ENCODE measurements at regions of chr5 and their contacts with region 1.

Region 1: DNA sequence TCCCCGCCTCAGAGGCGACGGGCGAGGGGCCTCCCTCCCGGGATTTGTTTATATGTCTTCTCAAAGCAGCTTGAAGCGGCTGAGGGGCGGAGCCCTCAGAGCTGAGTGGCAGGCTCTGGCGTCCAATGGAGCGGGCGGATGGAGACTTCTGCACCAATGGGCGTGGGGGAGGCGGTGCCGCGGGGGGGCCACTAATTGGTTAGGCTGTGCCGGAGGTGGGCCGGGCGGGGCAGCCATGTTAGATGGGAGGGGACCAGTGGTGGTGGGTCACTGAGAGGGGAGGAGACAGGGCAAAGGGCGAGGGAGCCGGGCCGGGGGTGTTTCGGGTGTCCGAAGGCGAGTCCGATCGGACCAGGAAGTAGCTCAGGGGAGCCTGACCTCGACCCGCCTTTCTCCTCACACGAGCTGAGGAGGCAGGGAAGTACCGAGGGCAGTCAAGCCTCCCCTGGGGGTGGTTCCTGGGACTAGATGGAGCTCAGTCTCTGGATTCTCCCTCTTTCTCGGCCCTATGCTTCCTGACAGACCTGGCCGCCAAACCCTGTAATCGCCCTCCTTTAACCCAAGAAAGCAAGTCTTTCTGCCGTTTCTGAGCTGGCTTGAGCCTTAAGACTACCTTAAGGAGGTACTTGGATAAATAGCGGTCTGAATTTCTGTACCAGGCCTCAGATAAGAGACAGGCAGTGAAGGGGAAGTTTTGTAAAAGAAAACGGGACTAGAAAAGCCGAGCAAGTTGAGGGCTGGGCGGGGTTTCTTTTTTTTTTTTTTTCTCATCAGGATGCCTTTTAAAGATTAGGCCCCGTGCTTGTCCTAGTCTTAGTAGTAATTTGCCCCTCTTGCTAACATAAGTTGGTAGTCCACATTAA is 1.1 kb downstream of the CREBRF start:
- DNase-seq: peak; percentile 94 to 100
- H3K4me3 ChIP-seq: peak overlapping the region; percentile 61
- H3K27ac ChIP-seq: peak overlapping the region; percentile 80
- H3K4me1 ChIP-seq: peaks cover 15% of the 10 kb centered on the region; the same call in 1 of the 2 replicates
- H3K27me3 ChIP-seq: no peaks in the 10 kb centered on the region
- CTCF ChIP-seq: no peak

Region 2: GRCh38 chr5:172674155-172674554 is 383.1 kb before region 1 on chr5:
- CTCF ChIA-PET with region 1: no interaction called
- POLR2A ChIA-PET with region 1: interaction called, 12 read pairs
- intact Hi-C with region 1: no loop called
- DNase-seq: no peak
- H3K4me3 ChIP-seq: no peak overlapping the region
- H3K27ac ChIP-seq: no peak overlapping the region
- H3K4me1 ChIP-seq: peaks cover 16% of the 10 kb centered on the region
- H3K27me3 ChIP-seq: no peaks in the 10 kb centered on the region
- CTCF ChIP-seq: no peak

Region 3: DNA sequence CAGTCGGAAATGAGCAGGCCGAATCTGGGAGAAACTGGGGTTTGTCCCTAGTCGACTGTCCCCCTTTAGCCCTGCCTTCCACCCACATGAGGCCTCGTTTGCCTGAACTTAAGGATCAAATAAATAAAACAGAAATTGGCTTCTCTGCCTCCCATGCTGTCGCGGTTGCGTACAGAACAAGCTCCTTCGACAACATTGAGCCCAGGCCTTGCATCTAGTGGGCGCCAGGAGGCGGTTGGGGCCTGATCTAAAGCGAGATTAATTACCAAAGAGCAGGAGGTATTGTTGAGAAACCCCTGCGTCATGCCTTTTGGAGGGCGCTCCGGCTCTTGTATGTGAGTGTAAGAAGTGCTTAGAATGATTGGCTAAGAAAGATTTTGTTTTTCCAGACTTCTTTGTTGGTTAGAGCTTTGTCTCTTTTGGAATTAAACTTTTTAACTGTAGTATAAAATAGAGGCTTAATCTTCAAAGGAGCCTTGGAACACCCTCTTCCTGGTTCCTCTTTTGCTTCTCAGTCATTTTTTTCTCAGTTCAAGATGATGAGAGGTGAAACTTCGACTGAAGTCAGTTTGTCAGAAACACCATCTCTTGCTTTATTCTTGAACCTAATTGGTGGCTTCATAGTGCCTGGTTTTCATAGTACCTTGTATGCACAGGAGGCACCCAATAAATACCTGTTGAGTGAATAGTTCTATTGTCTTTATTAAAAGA is 72.9 kb before region 1 on chr5:
- CTCF ChIA-PET with region 1: interaction called, 8 read pairs
- POLR2A ChIA-PET with region 1: interaction called, 10 read pairs
- intact Hi-C with region 1: loop called (anchors 1 kb)
- DNase-seq: peak; percentile 63 to 79
- H3K4me3 ChIP-seq: peak overlapping the region; percentile 87
- H3K27ac ChIP-seq: peak overlapping the region; percentile 77
- H3K4me1 ChIP-seq: peaks cover 13% of the 10 kb centered on the region; the same call in 1 of the 2 replicates
- H3K27me3 ChIP-seq: no peaks in the 10 kb centered on the region
- CTCF ChIP-seq: peak; percentile 65

Region 4: GRCh38 chr5:173075139-173075982 is 18.1 kb after region 1 on chr5:
- CTCF ChIA-PET with region 1: interaction called, 6 read pairs
- POLR2A ChIA-PET with region 1: interaction called, 3 read pairs
- intact Hi-C with region 1: loop called (anchors 1 kb)
- DNase-seq: peak; percentile 37 to 78
- H3K4me3 ChIP-seq: peak overlapping the region; percentile 31
- H3K27ac ChIP-seq: peak overlapping the region; percentile 90
- H3K4me1 ChIP-seq: peaks cover 39% of the 10 kb centered on the region
- H3K27me3 ChIP-seq: no peaks in the 10 kb centered on the region
- CTCF ChIP-seq: no peak

Region 5: GRCh38 chr5:173144200-173145176 is 87.2 kb after region 1 on chr5 and contains the start of gene BNIP1:
- CTCF ChIA-PET with region 1: interaction called, 3 read pairs
- POLR2A ChIA-PET with region 1: no interaction called
- intact Hi-C with region 1: loop called (anchors 1 kb)
- DNase-seq: peak; percentile 85 to 99
- H3K4me3 ChIP-seq: peak within 1 kb of the TSS; percentile 90
- H3K27ac ChIP-seq: peak within 1 kb of the TSS; percentile 73
- H3K4me1 ChIP-seq: no peaks in the 10 kb centered on the region
- H3K27me3 ChIP-seq: no peaks in the 10 kb centered on the region
- CTCF ChIP-seq: peak; percentile 84
- total RNA-seq, gene BNIP1: 13.3 and 13.5 TPM in 2 replicates

Region 6: DNA sequence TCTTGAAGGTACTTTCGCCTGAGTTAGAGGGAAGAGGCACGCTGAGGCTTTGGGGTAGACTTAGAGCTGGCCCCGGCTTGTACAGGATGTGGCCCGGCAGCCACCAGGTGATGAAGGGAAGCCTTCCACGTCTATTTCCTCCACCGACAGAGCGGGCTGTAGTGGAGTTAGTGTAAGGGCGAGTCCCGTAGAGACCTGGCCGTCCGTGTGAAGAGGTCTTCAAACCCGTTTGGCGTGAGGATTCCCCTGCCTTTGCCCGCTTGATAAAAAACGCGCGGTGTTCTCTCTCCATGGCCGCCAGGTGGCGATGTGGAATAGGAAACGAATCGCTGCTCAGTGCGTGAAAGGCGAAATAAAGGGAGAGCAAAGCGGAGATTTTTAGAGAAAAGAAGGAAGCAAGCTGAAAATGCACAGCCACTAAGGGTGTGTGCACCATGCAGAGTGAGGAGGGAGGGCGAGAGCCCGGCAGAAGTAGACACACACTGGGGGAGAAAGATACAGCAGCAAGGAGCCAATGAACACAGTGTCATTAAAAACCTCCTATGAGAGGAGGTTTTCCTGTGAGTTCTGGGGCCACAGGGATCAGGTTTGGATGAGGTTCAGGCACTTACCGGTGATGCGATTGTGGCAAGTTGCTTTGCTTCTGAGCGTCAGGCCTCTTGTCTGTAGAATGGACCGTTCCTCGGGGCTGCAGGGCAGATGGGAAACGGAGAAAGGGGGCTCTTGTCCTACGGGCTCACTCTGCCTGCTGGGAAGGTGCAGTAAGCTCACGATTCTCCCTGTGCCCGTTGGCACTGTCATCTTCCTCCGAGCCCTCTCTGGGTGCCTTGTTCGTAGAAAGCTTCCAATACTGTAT is 236.8 kb after region 1 on chr5:
- CTCF ChIA-PET with region 1: no interaction called
- POLR2A ChIA-PET with region 1: no interaction called
- intact Hi-C with region 1: loop called (anchors 5 kb)
- DNase-seq: peak; percentile 71 to 83
- H3K4me3 ChIP-seq: peak overlapping the region; percentile 45; the same call in 1 of the 2 replicates
- H3K27ac ChIP-seq: peak overlapping the region; percentile 28
- H3K4me1 ChIP-seq: peaks cover 26% of the 10 kb centered on the region
- H3K27me3 ChIP-seq: no peaks in the 10 kb centered on the region
- CTCF ChIP-seq: peak; percentile 92